ENCODE measurements at regions of chr3 and their contacts with region 1.

Region 1: GRCh38 chr3:149812606-149813366 is at the start of gene RNF13:
- DNase-seq: peak; percentile 97 to 100 (median 99)

Region 2: DNA sequence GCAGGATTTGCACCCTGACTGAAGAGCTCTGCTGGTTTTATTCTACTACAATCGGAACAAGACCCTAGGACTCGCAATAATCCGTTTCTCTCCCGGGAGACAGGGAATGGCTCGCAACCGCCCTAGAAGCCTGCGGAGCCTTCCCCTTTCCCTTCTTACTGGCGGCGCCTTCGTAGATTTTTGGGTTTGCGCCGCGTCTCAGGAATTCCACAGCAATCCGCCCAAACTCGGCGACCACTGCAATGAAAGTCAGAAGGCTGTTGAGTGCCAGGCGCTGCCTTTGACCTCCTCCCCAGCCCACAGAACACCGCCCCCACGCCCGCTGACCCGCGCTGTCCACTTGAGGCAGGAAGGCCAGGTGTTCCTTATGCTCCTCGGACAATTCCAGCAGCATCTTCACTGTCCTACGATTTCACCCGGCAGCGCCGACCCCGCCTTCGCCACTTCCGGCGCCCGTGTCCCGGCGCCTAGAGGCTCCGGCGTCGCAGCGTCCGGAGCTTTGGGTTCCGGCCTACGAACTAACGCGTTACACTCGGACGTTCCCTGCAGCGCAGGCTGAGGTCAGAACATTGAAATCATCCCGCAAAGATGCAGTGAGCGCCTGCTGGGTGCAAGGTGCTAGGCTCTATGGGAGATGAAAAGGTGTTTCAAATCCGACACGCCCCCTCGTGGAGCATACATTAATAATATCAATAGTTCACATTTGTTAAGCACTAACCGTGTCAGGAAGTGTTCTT is 60.6 kb before region 1 on chr3 and contains the start of gene COMMD2:
- intact Hi-C with region 1: loop called (anchors 5 kb)
- DNase-seq: peak; percentile 61 to 95 (median 73)

Region 3: DNA sequence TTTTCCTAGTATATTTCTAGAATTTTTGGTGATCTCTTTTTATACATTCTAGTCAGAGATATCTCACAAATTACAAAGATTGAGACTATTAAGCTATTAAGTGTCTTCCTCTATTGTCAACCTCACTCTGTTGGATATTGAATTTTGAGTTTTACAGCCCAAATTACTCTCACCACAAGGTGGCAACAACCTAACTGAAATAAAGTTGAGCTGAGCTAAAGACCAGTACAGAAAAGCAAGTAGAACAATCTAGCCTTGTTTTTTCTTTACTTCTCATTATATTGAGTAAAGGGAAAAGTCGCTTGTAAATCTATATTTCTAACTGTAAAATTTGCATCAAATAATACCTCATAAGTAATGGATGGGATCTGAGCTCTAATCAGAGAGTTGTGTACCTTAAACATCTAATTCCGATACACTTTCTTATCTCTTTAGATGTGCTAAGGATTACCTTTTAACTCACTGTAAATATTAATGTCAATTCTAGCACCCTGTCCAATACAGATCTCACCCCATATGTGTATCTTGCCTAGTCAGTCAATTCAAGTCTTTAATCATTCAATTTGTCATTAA is 46.9 kb before region 1 on chr3:
- intact Hi-C with region 1: loop called (anchors 2 kb)
- DNase-seq: no peak

Region 4: GRCh38 chr3:149902498-149903139 is 89.8 kb after region 1 on chr3:
- intact Hi-C with region 1: loop called (anchors 10 kb)
- DNase-seq: no peak

Region 5: DNA sequence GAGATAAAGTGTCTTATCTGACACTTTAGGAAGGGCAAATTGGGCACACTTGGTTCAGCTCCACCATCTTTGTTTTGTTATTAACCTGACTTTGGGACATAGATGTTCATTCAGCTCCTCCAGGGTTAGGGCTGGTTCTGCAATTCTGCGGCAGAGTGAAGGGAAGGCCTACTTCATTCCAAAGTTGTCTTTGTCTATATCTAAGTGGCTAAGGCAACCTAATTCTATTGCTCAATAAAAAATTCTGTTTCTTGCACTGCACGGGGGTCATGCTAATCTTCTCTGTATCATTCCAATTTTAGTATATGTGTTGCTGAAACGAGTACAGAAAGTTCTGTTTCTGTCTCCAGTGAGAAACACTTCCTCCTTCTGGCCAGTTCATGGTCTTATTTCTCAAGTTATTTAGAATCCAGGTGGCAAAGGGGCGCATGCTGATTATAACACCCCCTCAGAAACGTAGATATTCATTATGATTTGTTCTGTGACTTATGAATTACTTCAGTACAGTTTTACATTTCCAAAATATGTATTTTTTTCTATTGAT is 104.4 kb after region 1 on chr3:
- intact Hi-C with region 1: no loop called
- DNase-seq: no peak